CD8-positive, alpha-beta T cell (primary cell): ENCODE measurements at regions of chr1 and their contacts with region 1.

Region 1: GRCh38 chr1:25099343-25099951 is 132.9 kb downstream of the SYF2 start:
- DNase-seq: peak; percentile 8 to 82 (median 52)
- ATAC-seq: peak; percentile 50
- H3K4me3 ChIP-seq: peak overlapping the region; percentile 21 to 32
- H3K4me3 Mint-ChIP-seq: peak overlapping the region; percentile 71
- H3K27ac ChIP-seq: peak overlapping the region; percentile 19 to 60
- H3K27ac Mint-ChIP-seq: peak overlapping the region; percentile 86
- H3K4me1 ChIP-seq: peaks cover 73% of the 10 kb centered on the region
- H3K4me1 Mint-ChIP-seq: peaks cover 74% of the 10 kb centered on the region
- H3K27me3 ChIP-seq: no peaks in the 10 kb centered on the region
- H3K27me3 Mint-ChIP-seq: no peaks in the 10 kb centered on the region
- CTCF ChIP-seq: no peak

Region 2: DNA sequence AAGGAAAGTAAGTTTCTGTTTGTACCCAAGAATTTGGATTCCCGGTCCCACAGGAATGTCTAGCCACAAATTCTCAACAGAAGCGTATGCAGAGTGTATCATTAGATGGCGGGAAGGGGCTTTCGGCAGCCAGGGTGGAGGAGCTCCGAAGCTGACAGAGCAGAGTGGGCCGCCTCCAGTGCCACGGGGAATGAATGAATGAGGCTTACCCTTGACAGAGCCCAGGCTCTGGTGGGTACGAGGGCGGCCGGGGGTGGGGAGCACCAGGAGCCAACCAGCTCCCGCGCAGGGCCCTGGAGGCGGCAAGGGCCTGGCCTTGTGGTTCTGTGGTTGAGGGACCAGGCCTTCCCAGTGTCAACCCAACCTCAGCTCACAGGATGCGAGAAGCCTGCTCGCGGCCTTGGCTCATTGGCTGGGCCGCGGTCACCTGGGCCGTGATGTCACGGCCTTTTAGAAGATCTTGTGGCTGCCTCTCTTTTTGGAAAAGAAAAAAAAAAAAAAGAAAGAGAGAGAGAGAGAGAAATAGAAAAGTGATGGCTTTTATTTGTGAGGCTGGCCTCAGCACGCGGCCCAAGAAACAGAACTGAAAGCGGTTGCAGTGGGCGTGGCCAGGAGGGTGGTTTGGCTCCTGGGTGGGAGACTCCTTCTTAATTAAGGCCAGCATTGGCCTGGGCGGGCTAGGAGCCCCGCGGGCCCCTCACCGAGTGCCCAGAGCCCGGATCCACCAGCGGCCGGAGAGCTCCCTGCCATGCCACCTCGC is 134.5 kb before region 1 on chr1:
- CTCF ChIA-PET with region 1: interaction called, 53 read pairs
- POLR2A ChIA-PET with region 1: interaction called, 17 read pairs
- intact Hi-C with region 1: loop called (anchors 1 kb)
- DNase-seq: peak; percentile 77 to 98 (median 87)
- ATAC-seq: peak; percentile 78
- H3K4me3 ChIP-seq: peak overlapping the region; percentile 60 to 64
- H3K4me3 Mint-ChIP-seq: peak overlapping the region; percentile 90
- H3K27ac ChIP-seq: peak overlapping the region; percentile 67 to 79
- H3K27ac Mint-ChIP-seq: peak overlapping the region; percentile 99
- H3K4me1 ChIP-seq: peaks cover 84% of the 10 kb centered on the region
- H3K4me1 Mint-ChIP-seq: peaks cover 78% of the 10 kb centered on the region
- H3K27me3 ChIP-seq: no peaks in the 10 kb centered on the region
- H3K27me3 Mint-ChIP-seq: no peaks in the 10 kb centered on the region
- CTCF ChIP-seq: no peak

Region 3: DNA sequence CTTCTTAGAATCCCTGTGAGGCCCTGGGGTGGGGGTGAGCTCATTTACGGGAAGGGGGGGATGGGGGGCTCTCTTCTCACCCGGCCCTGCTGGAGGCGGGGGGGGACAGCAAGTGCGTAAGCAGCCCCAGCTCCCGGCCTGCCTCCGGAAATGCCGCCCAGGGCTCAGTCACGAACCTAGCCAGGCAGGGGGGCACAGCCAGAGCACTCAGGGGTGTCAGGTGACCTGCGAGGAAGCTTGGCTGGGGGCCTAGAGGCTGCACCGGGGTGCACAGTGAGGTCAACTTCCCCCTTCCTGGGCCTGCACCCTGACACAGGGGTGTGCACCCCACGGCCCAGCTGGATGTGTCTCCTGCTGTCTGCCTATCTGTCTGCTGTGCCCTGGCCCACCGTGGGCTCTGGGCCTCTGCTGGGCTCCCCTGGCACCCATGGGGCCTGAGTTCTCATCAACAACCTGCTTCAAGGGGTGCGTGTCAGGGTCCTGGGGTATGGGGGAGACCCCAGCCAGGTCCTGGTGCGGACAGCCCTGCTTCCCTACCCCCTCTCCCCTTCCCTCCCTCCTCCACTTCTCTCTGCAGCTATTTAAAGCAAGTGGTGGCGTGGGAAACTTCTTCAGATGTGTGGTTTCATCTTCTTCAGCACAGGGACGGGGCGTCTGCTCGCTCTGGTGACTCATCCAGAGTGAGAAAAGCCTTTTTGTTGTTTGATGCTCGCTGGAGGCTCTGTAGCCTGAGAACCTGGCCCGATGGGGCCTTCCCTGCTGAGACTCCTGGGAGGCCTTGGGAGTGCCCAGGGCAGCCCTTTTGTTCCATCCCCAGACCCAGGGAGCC is 76.9 kb before region 1 on chr1:
- CTCF ChIA-PET with region 1: no interaction called
- POLR2A ChIA-PET with region 1: interaction called, 5 read pairs
- intact Hi-C with region 1: loop called in 1 of 2 experiments (anchors 1 kb)
- DNase-seq: peak; percentile 91 to 100 (median 95)
- ATAC-seq: peak; percentile 83
- H3K4me3 ChIP-seq: peak overlapping the region; percentile 43 to 45
- H3K4me3 Mint-ChIP-seq: peak overlapping the region; percentile 58
- H3K27ac ChIP-seq: peak overlapping the region; percentile 83 to 100
- H3K27ac Mint-ChIP-seq: peak overlapping the region; percentile 93
- H3K4me1 ChIP-seq: peaks cover 90% of the 10 kb centered on the region
- H3K4me1 Mint-ChIP-seq: peaks cover 88% of the 10 kb centered on the region
- H3K27me3 ChIP-seq: no peaks in the 10 kb centered on the region
- H3K27me3 Mint-ChIP-seq: no peaks in the 10 kb centered on the region
- CTCF ChIP-seq: no peak

Region 4: DNA sequence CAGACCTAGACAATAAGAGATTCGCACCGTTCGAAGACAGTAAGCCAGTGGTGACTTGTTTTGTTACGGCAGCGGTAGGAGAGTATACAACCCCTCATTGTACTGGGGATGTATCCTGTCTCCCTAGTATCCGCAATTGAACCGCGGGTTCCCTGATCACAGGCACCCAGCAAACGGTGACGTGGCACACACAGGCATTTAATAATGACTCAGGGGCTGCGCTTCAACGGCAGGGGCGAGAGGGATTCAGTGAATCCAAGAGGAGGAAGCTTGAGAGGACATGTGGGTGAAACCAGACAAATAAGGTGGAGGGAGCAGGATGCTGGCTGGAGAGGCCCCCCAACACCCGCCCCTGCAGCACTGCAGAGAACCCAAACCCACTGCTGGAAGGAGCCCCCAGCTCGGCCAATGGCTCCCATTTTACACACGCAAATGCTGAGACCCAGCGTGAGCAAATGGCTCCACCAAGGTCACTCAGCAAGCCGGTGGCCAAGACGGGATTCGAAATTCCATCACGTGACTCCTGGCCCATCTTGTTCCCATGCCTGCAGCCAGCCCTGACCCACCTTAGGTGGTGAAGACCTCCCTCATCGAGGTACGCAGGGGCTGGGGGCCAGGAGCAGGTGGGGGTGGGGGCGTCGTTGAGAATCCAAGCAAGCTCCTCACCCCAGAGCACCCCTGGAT is 17.1 kb before region 1 on chr1:
- CTCF ChIA-PET with region 1: interaction called, 18 read pairs
- POLR2A ChIA-PET with region 1: interaction called, 5 read pairs
- intact Hi-C with region 1: no loop called
- DNase-seq: no peak
- ATAC-seq: no peak
- H3K4me3 ChIP-seq: no peak overlapping the region
- H3K4me3 Mint-ChIP-seq: no peak overlapping the region
- H3K27ac ChIP-seq: no peak overlapping the region
- H3K27ac Mint-ChIP-seq: no peak overlapping the region
- H3K4me1 ChIP-seq: no peaks in the 10 kb centered on the region
- H3K4me1 Mint-ChIP-seq: no peaks in the 10 kb centered on the region
- H3K27me3 ChIP-seq: no peaks in the 10 kb centered on the region
- H3K27me3 Mint-ChIP-seq: no peaks in the 10 kb centered on the region
- CTCF ChIP-seq: no peak

Region 5: DNA sequence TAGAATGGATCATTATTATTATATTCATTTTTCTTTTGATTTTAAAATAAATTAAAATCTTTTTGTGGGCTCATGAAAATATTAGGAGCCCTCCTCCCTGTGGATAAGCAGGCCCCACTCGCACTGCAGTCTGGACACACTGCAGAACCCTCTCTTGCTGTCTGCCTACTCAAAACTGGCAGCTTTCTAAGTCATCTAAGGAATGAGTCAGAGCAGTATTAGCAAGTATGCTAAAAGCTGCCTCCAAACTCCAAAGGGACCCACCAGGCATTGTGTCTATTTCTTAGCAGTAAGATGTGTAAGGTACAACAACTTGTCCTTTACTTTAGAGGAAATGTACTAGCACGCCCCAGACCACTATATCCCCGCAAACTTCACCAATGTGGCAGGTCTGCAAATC is 24.1 kb after region 1 on chr1:
- CTCF ChIA-PET with region 1: interaction called, 11 read pairs
- POLR2A ChIA-PET with region 1: no interaction called
- intact Hi-C with region 1: no loop called
- DNase-seq: no peak
- ATAC-seq: no peak
- H3K4me3 ChIP-seq: no peak overlapping the region
- H3K4me3 Mint-ChIP-seq: no peak overlapping the region
- H3K27ac ChIP-seq: no peak overlapping the region
- H3K27ac Mint-ChIP-seq: no peak overlapping the region
- H3K4me1 ChIP-seq: peaks cover 11% of the 10 kb centered on the region
- H3K4me1 Mint-ChIP-seq: peaks cover 15% of the 10 kb centered on the region
- H3K27me3 ChIP-seq: no peaks in the 10 kb centered on the region
- H3K27me3 Mint-ChIP-seq: no peaks in the 10 kb centered on the region
- CTCF ChIP-seq: no peak

Region 6: DNA sequence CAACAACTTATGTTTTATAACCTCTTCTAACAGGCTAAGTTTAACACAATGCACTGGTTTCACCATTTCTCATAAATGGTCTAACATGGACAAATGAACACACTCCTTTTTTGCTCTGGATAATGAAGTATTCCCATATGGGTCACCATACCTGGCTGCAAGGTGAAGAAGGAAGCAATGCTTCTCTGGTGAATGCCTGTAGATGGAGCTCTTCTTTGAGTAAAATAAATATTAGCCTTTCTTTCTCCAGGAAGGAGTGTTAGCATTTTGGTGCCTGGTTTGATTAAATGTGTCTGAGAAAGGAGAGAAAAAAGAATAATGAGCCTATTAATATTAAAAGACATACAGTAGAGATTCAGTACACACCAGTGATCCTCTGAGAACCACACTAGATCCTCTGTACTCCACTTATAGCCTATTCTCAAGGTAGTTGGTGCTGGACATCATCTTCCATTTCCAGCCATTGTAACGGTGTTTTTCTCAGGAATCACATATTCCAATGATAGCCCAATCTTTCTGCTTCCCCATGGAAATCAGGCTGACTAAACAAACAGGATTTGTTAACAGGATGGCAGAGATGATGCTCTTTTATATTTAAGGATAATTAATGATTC is 737.9 kb after region 1 on chr1:
- CTCF ChIA-PET with region 1: no interaction called
- POLR2A ChIA-PET with region 1: no interaction called
- intact Hi-C with region 1: no loop called
- DNase-seq: peak in 1 of 9 experiments; percentile 26
- ATAC-seq: no peak
- H3K4me3 ChIP-seq: no peak overlapping the region
- H3K4me3 Mint-ChIP-seq: no peak overlapping the region
- H3K27ac ChIP-seq: no peak overlapping the region
- H3K27ac Mint-ChIP-seq: no peak overlapping the region
- H3K4me1 ChIP-seq: no peaks in the 10 kb centered on the region
- H3K4me1 Mint-ChIP-seq: peaks cover under 1% of the 10 kb centered on the region
- H3K27me3 ChIP-seq: no peaks in the 10 kb centered on the region
- H3K27me3 Mint-ChIP-seq: no peaks in the 10 kb centered on the region
- CTCF ChIP-seq: no peak